MCF 10A (cell line): ENCODE measurements at regions of chr1 and their contacts with region 1.

Region 1: DNA sequence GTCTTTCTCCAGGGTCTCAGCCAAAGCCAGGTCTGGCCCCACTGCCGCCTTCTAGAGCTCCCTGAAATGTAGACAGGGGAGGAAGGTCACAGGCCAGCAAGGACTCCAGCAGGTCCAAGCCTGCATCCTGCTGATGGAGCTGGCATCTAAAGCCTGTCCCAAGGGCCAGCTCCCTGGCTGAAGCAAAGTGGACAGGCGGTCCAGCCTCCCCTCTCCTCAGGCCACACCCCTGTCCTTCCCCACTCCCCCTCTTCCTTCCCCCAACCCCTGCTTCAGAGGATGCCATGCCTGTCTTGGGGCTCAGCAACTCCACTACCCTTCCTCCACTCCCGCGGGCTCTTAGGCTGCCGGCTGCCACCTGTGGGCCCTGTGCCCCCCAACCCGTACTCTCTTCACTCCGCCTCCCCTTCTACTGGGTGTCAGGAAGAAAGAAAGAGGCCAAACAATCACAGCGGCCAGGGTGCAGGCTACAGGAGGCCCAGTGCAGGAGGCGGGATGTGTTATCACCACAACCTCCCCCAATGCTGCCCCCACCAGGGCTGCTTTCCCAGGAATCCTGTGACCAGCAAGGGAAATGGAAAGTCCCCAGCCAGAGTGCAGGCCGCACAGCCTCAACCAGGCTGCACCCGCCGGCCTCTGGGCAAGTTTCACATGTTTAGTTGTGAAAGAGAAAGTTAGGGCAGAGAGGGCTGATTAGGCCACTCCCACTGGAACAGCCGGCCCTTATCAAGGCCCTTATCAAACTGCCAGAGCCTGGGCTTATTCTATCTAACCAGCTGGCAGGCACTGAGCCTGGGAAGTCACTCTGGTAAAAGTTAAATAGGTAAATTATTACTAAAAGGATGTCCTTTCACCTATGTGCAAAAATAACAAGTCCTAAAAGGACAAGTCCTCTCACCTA is 34.1 kb downstream of the ACOT7 start:
- DNase-seq: peak; percentile 39
- H3K4me3 Mint-ChIP-seq: no peak overlapping the region
- H3K27ac Mint-ChIP-seq: no peak overlapping the region
- H3K4me1 Mint-ChIP-seq: peaks cover 18% of the 10 kb centered on the region
- H3K27me3 Mint-ChIP-seq: no peaks in the 10 kb centered on the region
- CTCF ChIP-seq: no peak

Region 2: GRCh38 chr1:6378096-6378746 is 18.8 kb after region 1 on chr1:
- CTCF ChIA-PET with region 1: interaction called, 75 read pairs
- POLR2A ChIA-PET with region 1: no interaction called
- intact Hi-C with region 1: no loop called
- DNase-seq: no peak
- H3K4me3 Mint-ChIP-seq: no peak overlapping the region
- H3K27ac Mint-ChIP-seq: no peak overlapping the region
- H3K4me1 Mint-ChIP-seq: no peaks in the 10 kb centered on the region
- H3K27me3 Mint-ChIP-seq: no peaks in the 10 kb centered on the region
- CTCF ChIP-seq: no peak

Region 3: DNA sequence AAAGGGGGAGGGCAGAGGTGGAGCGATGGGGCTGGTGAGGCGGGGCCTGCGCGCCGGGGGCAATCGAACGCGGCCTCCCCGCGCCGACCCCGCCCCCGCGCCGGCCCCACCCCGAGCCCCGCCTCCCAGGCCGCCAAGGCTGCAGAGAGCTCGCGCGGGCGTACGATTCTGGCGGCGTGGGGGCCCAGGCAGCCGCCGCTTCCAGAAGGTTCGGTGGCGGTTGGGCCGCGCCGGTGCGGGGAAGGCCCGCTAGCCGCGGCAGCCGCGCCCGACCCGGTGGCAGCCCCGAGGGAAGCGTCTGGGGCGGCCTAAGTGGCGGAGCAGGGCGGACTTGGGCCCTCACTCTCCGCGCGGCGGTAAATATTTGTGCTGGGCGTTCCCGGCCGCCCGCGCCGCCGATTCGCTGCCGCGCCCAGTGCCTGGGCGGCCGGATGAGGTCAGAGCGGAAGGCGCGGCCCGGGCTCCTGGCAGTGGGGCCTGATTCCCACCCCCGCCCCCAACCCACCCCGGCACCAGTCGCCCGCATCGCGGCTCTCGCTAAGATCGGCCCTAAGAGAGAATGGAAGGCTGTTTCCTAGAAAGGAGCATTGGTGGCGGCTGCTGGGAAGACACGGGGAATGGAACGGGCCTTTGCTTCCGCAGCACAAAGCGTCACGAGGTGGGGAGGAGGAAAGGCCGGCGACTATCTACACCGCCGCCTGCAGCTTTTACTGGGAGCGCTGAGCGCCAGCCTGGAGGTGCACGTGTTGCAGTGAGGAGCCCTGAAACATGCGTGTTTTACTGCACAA is 34.1 kb after region 1 on chr1 and contains the start of gene ACOT7:
- CTCF ChIA-PET with region 1: interaction called, 188 read pairs
- POLR2A ChIA-PET with region 1: interaction called, 38 read pairs
- intact Hi-C with region 1: loop called (anchors 1 kb)
- DNase-seq: peak; percentile 87
- H3K4me3 Mint-ChIP-seq: peak within 1 kb of the TSS; percentile 75
- H3K27ac Mint-ChIP-seq: peak within 1 kb of the TSS; percentile 91
- H3K4me1 Mint-ChIP-seq: no peaks in the 10 kb centered on the region
- H3K27me3 Mint-ChIP-seq: no peaks in the 10 kb centered on the region
- CTCF ChIP-seq: peak; percentile 16
- total RNA-seq, gene ACOT7: 110 and 117 TPM in 2 replicates

Region 4: DNA sequence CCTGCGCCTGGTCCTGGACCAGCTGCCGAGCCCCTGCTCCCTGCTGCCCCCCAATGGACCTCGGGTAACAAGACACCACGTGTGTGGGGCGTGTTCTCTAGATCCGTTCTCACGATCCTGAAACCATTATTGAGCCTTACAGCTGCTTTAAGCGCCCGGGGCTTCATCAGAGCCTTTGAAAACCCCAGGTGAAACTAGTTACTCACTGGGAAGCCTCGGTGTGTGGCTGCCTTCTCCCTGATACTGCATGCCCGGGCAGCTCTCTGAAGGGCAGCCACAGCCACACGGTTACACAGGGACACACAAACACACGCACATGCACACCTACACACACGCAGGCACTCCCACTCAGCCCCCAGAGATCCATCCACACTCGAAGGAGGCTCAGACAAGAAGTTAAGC is 55.0 kb after region 1 on chr1:
- CTCF ChIA-PET with region 1: interaction called, 26 read pairs
- POLR2A ChIA-PET with region 1: interaction called, 7 read pairs
- intact Hi-C with region 1: no loop called
- DNase-seq: peak; percentile 97
- H3K4me3 Mint-ChIP-seq: peak overlapping the region; percentile 65
- H3K27ac Mint-ChIP-seq: peak overlapping the region; percentile 99
- H3K4me1 Mint-ChIP-seq: peaks cover 32% of the 10 kb centered on the region
- H3K27me3 Mint-ChIP-seq: no peaks in the 10 kb centered on the region
- CTCF ChIP-seq: peak; percentile 54

Region 5: GRCh38 chr1:6438047-6438525 is 78.6 kb after region 1 on chr1:
- CTCF ChIA-PET with region 1: interaction called, 44 read pairs
- POLR2A ChIA-PET with region 1: no interaction called
- intact Hi-C with region 1: loop called (anchors 2 kb)
- DNase-seq: peak; percentile 77
- H3K4me3 Mint-ChIP-seq: no peak overlapping the region
- H3K27ac Mint-ChIP-seq: no peak overlapping the region
- H3K4me1 Mint-ChIP-seq: peaks cover 13% of the 10 kb centered on the region
- H3K27me3 Mint-ChIP-seq: no peaks in the 10 kb centered on the region
- CTCF ChIP-seq: peak; percentile 89